Aorta (tissue), 5 donors: ENCODE measurements at regions of chr20 and their contacts with region 1.

Region 1: DNA sequence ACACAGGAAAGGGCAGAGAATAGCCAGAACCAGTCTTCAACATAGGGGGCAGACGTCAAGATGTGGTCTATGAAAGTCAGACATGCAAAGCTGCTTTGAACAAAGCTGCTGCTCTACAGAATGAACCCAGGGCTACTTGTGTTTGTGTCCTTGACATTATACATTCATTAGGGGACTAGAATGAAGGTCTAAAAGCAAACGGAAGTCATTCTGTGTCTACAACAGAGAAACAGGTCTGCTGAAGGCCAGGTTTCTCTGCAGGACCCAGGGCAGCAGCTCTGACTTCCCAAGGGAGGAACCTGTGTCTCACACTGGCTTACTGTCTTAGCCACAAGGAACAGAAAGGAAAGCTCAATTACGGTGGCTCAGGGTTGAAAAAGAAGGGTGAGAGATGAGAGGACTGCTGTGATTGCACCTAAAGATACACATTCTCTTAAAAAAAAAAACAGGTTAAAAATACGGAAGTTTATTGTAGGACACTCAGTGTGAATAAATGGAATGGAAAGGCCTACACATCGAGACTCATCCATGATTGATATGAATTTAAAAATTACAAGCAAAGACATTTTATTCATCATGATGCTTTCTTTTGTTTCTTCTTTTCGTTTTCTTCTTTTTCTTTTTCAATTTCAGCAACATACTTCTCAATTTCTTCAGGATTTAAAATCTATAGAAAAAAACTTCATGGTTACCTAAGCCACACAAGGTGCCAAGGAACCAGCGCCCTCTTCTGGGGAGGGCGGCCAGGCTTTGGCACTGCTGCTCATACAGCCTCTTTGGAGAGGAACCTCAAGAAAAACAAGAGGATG is 6.7 kb downstream of the PSMA7 start:
- DNase-seq: peak; percentile 74 to 86
- ATAC-seq: peak; percentile 61
- H3K4me3 ChIP-seq: no peak overlapping the region
- H3K27ac ChIP-seq: no peak overlapping the region
- H3K4me1 ChIP-seq: no peaks in the 10 kb centered on the region
- H3K27me3 ChIP-seq: no peaks in the 10 kb centered on the region

Region 2: DNA sequence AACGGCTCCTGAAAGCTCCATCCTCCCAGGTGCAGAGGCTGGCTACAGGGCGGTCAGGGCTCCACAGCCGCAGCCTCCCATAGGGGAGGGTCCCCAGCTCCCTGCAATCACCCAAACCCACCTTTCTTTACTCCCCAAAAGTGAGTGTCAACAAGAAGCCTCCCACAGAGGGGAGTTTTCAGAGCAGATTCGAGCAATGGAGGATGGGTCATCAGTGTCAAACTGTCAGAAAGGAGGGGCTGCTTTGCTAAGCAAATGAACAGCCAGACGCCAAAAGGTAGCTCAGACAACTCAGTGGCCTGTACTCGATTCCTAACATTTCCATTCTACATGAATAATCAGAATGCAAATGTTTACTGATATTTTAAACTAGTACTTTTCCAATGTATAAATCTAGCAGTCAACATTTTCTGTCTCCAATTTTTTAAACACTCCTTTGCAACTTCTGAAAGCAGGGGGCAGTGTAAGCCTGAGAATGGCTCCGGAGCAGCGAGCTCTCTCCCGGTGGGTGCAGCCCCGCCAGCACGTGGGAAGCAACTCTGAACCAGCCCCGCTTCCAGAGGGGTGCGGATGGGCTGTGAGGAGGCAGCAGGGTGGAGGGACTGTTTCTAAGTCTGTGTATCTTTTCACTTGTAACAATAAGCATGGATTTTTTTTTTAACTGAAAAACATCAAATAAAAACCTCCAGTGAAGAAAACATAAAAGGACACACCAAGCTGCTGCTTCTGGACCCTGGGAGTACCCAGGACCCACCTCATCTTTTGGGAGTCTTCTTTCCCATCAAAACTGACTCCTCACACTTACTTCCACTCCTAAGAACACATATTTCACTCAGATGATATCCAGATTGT is 125.7 kb before region 1 on chr20:
- intact Hi-C with region 1: loop called (anchors 2 to 5 kb)
- DNase-seq: peak in 1 of 2 donors; percentile 67
- ATAC-seq: no peak
- H3K4me3 ChIP-seq: no peak overlapping the region
- H3K27ac ChIP-seq: no peak overlapping the region
- H3K4me1 ChIP-seq: no peaks in the 10 kb centered on the region
- H3K27me3 ChIP-seq: no peaks in the 10 kb centered on the region

Region 3: DNA sequence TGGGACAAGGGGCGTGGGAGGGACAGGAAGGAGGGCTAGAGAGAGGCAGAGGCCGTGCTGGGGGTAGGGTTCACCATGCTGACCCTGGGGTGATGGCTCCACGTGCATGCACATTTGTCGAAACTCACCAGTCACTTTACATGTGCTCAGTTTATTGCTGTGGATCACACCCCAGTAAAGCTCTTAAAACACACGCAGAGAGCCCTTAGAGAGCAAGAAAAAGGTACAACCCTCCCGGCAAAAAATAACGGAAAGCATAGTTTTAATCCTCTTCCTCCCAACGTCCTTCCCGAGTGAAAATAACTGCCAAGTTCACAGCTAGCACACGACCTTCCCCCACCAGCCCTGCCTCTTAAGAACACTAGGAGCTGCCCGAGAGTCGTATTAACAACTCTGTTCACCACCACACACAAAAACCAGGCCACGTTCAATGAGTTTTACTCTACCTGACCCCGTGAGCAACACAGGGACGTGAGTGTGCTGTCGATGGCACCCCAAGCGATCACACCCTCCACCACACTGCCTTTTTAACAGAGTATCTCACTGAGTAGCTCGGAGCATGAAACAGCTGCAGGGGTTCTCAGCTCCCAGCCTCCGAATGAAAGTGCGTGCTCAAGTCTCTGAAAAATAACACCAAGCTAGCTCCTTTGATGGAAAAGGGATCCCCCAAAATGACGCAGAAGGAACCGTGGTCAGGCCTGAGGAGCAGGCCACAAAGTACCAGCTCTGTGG is 110.5 kb before region 1 on chr20:
- intact Hi-C with region 1: loop called in 1 of 2 experiments (anchors 5 kb)
- DNase-seq: peak in 1 of 2 donors; percentile 43
- ATAC-seq: peak; percentile 56
- H3K4me3 ChIP-seq: no peak overlapping the region
- H3K27ac ChIP-seq: no peak overlapping the region
- H3K4me1 ChIP-seq: no peaks in the 10 kb centered on the region
- H3K27me3 ChIP-seq: no peaks in the 10 kb centered on the region

Region 4: GRCh38 chr20:62065669-62066338 is 70.7 kb before region 1 on chr20 and contains the start of gene TAF4:
- intact Hi-C with region 1: loop called (anchors 5 kb)
- DNase-seq: peak; percentile 86 to 93
- ATAC-seq: peak; percentile 83
- H3K4me3 ChIP-seq: peak within 1 kb of the TSS; percentile 90 to 94
- H3K27ac ChIP-seq: peak within 1 kb of the TSS; percentile 72 to 83
- H3K4me1 ChIP-seq: no peaks in the 10 kb centered on the region
- H3K27me3 ChIP-seq: peaks cover 0 to 2% of the 10 kb centered on the region in 2 donors
- total RNA-seq, gene TAF4: 13.2 to 19.5 TPM

Region 5: GRCh38 chr20:62121776-62122631 is 14.5 kb before region 1 on chr20 and contains the start of gene LSM14B:
- intact Hi-C with region 1: loop called in 1 of 2 experiments (anchors 1 kb)
- DNase-seq: peak; percentile 97 to 98
- ATAC-seq: peak; percentile 96
- H3K4me3 ChIP-seq: peak within 1 kb of the TSS; percentile 85 to 87
- H3K27ac ChIP-seq: peak within 1 kb of the TSS; percentile 14 to 90
- H3K4me1 ChIP-seq: peaks cover 0 to 2% of the 10 kb centered on the region in 2 donors
- H3K27me3 ChIP-seq: no peaks in the 10 kb centered on the region
- total RNA-seq, gene LSM14B: 25.0 to 29.5 TPM

Region 6: GRCh38 chr20:62642040-62642665 is 505.7 kb after region 1 on chr20 and contains the start of gene SLCO4A1:
- intact Hi-C with region 1: no loop called
- DNase-seq: peak; percentile 80 to 91
- ATAC-seq: peak; percentile 82
- H3K4me3 ChIP-seq: peak within 1 kb of the TSS in 1 of 2 donors; percentile 8
- H3K27ac ChIP-seq: no peak within 1 kb of the TSS
- H3K4me1 ChIP-seq: no peaks in the 10 kb centered on the region
- H3K27me3 ChIP-seq: no peaks in the 10 kb centered on the region
- total RNA-seq, gene SLCO4A1: 13.9 to 14.6 TPM